Natural killer cell (primary cell): ENCODE measurements at regions of chr2 and their contacts with region 1.

Region 1: GRCh38 chr2:20411361-20411894 is 35.4 kb upstream of the RHOB start:
- DNase-seq: peak; percentile 69 to 77
- ATAC-seq: peak; percentile 96 to 100 (median 100)
- H3K4me3 ChIP-seq: no peak overlapping the region
- H3K4me3 Mint-ChIP-seq: no peak overlapping the region
- H3K27ac ChIP-seq: no peak overlapping the region
- H3K27ac Mint-ChIP-seq: no peak overlapping the region
- H3K4me1 ChIP-seq: peaks cover 7% of the 10 kb centered on the region
- H3K4me1 Mint-ChIP-seq: peaks cover 5 to 7% of the 10 kb centered on the region in 2 donors
- H3K27me3 ChIP-seq: no peaks in the 10 kb centered on the region
- H3K27me3 Mint-ChIP-seq: peaks cover 0 to 7% of the 10 kb centered on the region in 2 donors
- CTCF ChIP-seq: peak; percentile 79

Region 2: GRCh38 chr2:20642055-20642971 is 230.9 kb after region 1 on chr2:
- intact Hi-C with region 1: loop called (anchors 1 kb)
- DNase-seq: peak; percentile 75 to 85
- ATAC-seq: peak; percentile 92 to 100 (median 99)
- H3K4me3 ChIP-seq: no peak overlapping the region
- H3K4me3 Mint-ChIP-seq: no peak overlapping the region
- H3K27ac ChIP-seq: no peak overlapping the region
- H3K27ac Mint-ChIP-seq: no peak overlapping the region
- H3K4me1 ChIP-seq: peaks cover 9% of the 10 kb centered on the region
- H3K4me1 Mint-ChIP-seq: peaks cover 0 to 15% of the 10 kb centered on the region in 2 donors
- H3K27me3 ChIP-seq: no peaks in the 10 kb centered on the region
- H3K27me3 Mint-ChIP-seq: no peaks in the 10 kb centered on the region
- CTCF ChIP-seq: peak; percentile 82